WTC11 (cell line): ENCODE measurements at regions of chr11 and their contacts with region 1.

Region 1: GRCh38 chr11:122020902-122021301 is 95.1 kb downstream of the BLID start:
- DNase-seq: no peak
- ATAC-seq: no peak
- H3K4me3 Mint-ChIP-seq: no peak overlapping the region
- H3K27ac Mint-ChIP-seq: no peak overlapping the region
- H3K4me1 Mint-ChIP-seq: peaks cover 10% of the 10 kb centered on the region; the same call in 1 of the 2 replicates
- H3K27me3 Mint-ChIP-seq: no peaks in the 10 kb centered on the region
- CTCF ChIP-seq: peak; percentile 33; the same call in 1 of the 2 replicates

Region 2: DNA sequence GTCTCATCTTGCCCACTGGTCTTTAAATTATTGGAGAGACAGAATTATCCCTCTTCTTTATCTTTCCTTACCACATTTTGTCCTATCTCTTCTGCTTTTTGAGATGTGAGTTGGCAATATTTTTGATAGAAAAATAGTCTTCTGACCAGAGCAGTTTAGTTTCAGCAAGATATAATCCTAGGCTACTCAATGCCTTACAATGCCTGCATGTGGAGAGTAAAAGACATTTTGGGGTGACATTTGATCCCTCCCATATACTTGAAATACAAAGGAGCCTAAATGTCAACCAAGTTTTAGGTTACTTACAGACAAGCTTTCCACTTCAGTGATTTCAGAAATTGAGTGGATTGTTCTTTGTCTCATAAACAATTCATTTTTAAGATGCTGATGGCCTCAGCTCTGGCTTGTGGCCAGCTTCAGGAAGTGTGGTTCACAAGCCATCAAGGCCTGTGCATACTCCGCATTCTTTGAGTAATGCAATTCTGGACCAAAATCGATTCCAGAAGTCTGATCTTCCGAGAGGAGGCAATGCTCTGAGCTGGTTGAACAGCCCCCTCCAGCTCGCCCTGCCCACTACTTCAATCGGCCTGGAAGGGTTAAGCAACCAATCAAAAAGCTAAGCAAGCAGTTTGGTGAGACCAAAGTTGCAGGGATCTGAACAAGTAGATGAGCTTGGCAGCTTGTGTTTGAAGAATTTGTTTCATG is 179.3 kb before region 1 on chr11:
- CTCF ChIA-PET with region 1: no interaction called
- POLR2A ChIA-PET with region 1: no interaction called
- DNase-seq: peak; percentile 12
- ATAC-seq: peak; percentile 72
- H3K4me3 Mint-ChIP-seq: no peak overlapping the region
- H3K27ac Mint-ChIP-seq: no peak overlapping the region
- H3K4me1 Mint-ChIP-seq: peaks cover 13% of the 10 kb centered on the region
- H3K27me3 Mint-ChIP-seq: no peaks in the 10 kb centered on the region
- CTCF ChIP-seq: no peak

Region 3: GRCh38 chr11:121996574-121996973 is 24.3 kb before region 1 on chr11:
- CTCF ChIA-PET with region 1: no interaction called
- POLR2A ChIA-PET with region 1: no interaction called
- DNase-seq: no peak
- ATAC-seq: no peak
- H3K4me3 Mint-ChIP-seq: no peak overlapping the region
- H3K27ac Mint-ChIP-seq: no peak overlapping the region
- H3K4me1 Mint-ChIP-seq: no peaks in the 10 kb centered on the region
- H3K27me3 Mint-ChIP-seq: no peaks in the 10 kb centered on the region
- CTCF ChIP-seq: no peak

Region 4: DNA sequence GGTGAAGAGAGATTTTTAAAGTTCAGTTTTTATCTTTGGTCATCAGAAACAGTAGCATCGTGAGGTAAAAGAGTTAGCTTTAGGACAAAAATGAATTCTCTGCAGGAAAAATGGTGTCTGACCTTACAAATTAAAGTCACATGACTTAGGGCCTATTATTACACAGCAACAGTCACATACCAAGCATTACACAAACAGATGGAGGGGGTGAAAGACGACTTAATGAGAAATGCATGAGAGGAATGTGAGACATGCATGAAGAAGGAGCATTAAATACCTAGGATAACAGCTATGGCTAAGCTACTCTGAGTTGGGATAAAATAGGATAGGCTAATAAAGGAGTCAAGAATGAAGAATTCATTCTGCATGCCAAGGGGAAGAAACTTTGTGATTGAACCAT is 17.6 kb after region 1 on chr11:
- CTCF ChIA-PET with region 1: no interaction called
- POLR2A ChIA-PET with region 1: no interaction called
- DNase-seq: no peak
- ATAC-seq: peak; percentile 85
- H3K4me3 Mint-ChIP-seq: no peak overlapping the region
- H3K27ac Mint-ChIP-seq: no peak overlapping the region
- H3K4me1 Mint-ChIP-seq: peaks cover 62% of the 10 kb centered on the region
- H3K27me3 Mint-ChIP-seq: no peaks in the 10 kb centered on the region
- CTCF ChIP-seq: no peak

Region 5: GRCh38 chr11:122101625-122102291 is 80.9 kb after region 1 on chr11:
- CTCF ChIA-PET with region 1: interaction called, 11 read pairs
- POLR2A ChIA-PET with region 1: no interaction called
- DNase-seq: peak; percentile 60
- ATAC-seq: peak; percentile 80
- H3K4me3 Mint-ChIP-seq: no peak overlapping the region
- H3K27ac Mint-ChIP-seq: no peak overlapping the region
- H3K4me1 Mint-ChIP-seq: peaks cover 36% of the 10 kb centered on the region
- H3K27me3 Mint-ChIP-seq: peaks cover 21% of the 10 kb centered on the region
- CTCF ChIP-seq: 0 out of 2 replicates have a peak, but pooled peaks have one; percentile 23